HAP-1 (cell line): ENCODE measurements at regions of chr6 and their contacts with region 1.

Region 1: GRCh38 chr6:166402582-166403277 is 20.0 kb upstream of the MPC1 start:
- DNase-seq: no peak
- H3K4me3 ChIP-seq: no peak overlapping the region
- H3K4me1 ChIP-seq: no peaks in the 10 kb centered on the region
- H3K27me3 ChIP-seq: no peaks in the 10 kb centered on the region

Region 2: GRCh38 chr6:166275714-166276166 is 127.0 kb before region 1 on chr6:
- in situ Hi-C with region 1: loop called (anchors 5 kb)
- DNase-seq: peak; percentile 37 to 79
- H3K4me3 ChIP-seq: no peak overlapping the region
- H3K4me1 ChIP-seq: no peaks in the 10 kb centered on the region; the same call in 1 of the 2 replicates
- H3K27me3 ChIP-seq: no peaks in the 10 kb centered on the region